HAP-1 (cell line): ENCODE measurements at regions of chr2 and their contacts with region 1.

Region 1: DNA sequence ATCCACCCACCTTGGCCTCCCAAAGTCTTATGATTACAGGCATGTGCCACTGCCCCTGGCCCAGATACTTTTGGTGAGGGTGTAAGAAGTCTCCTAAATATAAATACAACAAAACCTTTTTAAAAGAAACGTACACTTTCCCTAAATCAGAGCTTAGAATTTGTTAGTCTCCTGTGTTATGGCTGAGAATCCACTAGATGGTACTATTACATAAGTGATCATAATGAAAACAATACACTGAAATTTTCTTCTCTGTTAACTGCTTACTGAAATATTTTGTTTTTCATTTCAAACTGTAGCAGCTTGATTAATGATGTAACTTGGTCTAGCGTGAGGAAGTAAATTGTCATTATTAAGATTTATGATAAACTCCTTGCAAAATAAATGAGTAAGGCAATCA is 74.8 kb upstream of the FAM98A start:
- DNase-seq: peak in 1 of 2 experiments; percentile 32
- H3K4me3 ChIP-seq: no peak overlapping the region
- H3K4me1 ChIP-seq: no peaks in the 10 kb centered on the region
- H3K27me3 ChIP-seq: peaks cover 3% of the 10 kb centered on the region; the same call in 1 of the 2 replicates

Region 2: GRCh38 chr2:35410431-35411061 is 1736.6 kb after region 1 on chr2:
- in situ Hi-C with region 1: loop called (anchors 25 kb)
- DNase-seq: peak; percentile 27 to 73
- H3K4me3 ChIP-seq: no peak overlapping the region
- H3K4me1 ChIP-seq: no peaks in the 10 kb centered on the region
- H3K27me3 ChIP-seq: no peaks in the 10 kb centered on the region